ENCODE measurements at regions of chrX and their contacts with region 1.

Region 1: GRCh38 chrX:149161435-149162088 is 343.5 kb downstream of the IDS start:
- DNase-seq: no peak
- ATAC-seq: no peak
- H3K4me3 Mint-ChIP-seq: no peak overlapping the region
- H3K27ac Mint-ChIP-seq: no peak overlapping the region
- H3K4me1 Mint-ChIP-seq: no peaks in the 10 kb centered on the region
- H3K27me3 Mint-ChIP-seq: peaks cover 3% of the 10 kb centered on the region

Region 2: GRCh38 chrX:148541544-148541983 is 620.0 kb before region 1 on chrX:
- CTCF ChIA-PET with region 1: no interaction called
- POLR2A ChIA-PET with region 1: no interaction called
- intact Hi-C with region 1: no loop called
- DNase-seq: no peak
- ATAC-seq: no peak
- H3K4me3 Mint-ChIP-seq: no peak overlapping the region
- H3K27ac Mint-ChIP-seq: no peak overlapping the region
- H3K4me1 Mint-ChIP-seq: no peaks in the 10 kb centered on the region
- H3K27me3 Mint-ChIP-seq: no peaks in the 10 kb centered on the region

Region 3: GRCh38 chrX:149221230-149221629 is 59.7 kb after region 1 on chrX:
- CTCF ChIA-PET with region 1: no interaction called
- POLR2A ChIA-PET with region 1: no interaction called
- intact Hi-C with region 1: loop called in 1 of 2 experiments (anchors 5 kb)
- DNase-seq: no peak
- ATAC-seq: no peak
- H3K4me3 Mint-ChIP-seq: no peak overlapping the region
- H3K27ac Mint-ChIP-seq: no peak overlapping the region
- H3K4me1 Mint-ChIP-seq: no peaks in the 10 kb centered on the region
- H3K27me3 Mint-ChIP-seq: no peaks in the 10 kb centered on the region